B cell (primary cell): ENCODE measurements at regions of chr18 and their contacts with region 1.

Region 1: DNA sequence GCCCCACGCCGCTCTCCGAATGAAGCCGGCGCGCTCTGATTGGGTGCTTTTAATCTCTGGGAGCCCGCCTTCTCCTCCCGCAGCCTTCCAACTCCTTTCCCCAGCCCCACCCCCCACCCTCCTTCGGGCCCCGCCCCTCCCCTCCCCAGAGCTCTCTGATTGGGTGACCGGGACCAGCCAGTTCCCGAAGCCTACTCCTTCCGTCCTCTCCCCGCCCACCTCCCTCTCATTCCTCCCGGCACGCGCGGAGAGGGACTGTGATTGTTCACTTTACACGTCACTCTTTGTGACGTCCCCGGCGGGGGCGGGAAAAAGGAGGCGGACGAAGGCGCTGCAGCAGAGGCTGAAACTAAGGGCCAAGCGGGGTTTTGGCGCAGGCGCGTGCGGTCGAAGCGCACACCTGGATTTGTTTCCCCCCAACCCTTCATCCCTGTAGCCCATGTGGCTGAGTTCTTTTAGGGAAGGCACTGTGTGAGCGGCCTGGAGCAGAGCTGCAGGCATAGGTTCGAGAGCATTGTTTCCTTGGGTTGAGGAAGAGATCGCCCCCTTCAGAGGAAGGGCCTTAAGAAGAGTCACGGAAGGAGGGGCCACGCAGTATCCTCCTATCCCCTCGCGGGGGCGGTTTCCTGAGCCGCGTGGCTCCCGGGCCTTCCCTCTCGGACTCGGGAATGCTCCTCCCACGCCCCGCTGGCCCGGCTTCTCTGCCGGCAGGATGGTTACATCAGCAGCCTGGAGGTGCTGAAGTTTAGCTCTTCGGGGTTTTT is at the start of gene MEX3C:
- DNase-seq: peak; percentile 100
- ATAC-seq: peak; percentile 81
- H3K4me3 ChIP-seq: peak within 1 kb of the TSS; percentile 65 to 94 (median 84)
- H3K4me3 Mint-ChIP-seq: peak within 1 kb of the TSS; percentile 97
- H3K27ac ChIP-seq: peak within 1 kb of the TSS; percentile 74 to 87
- H3K27ac Mint-ChIP-seq: peak within 1 kb of the TSS; percentile 98
- H3K4me1 ChIP-seq: peaks cover 25 to 27% of the 10 kb centered on the region in 2 donors
- H3K4me1 Mint-ChIP-seq: peaks cover 32% of the 10 kb centered on the region
- H3K27me3 ChIP-seq: no peaks in the 10 kb centered on the region
- H3K27me3 Mint-ChIP-seq: no peaks in the 10 kb centered on the region
- CTCF ChIP-seq: peak; percentile 23
- total RNA-seq, gene MEX3C: 92.4 and 93.9 TPM in 2 replicates

Region 2: GRCh38 chr18:50266248-50266704 is 931.6 kb before region 1 on chr18 and contains the start of gene CFAP53:
- CTCF ChIA-PET with region 1: no interaction called
- POLR2A ChIA-PET with region 1: interaction called, 3 read pairs
- intact Hi-C with region 1: loop called (anchors 5 kb)
- DNase-seq: peak; percentile 96
- ATAC-seq: peak; percentile 79
- H3K4me3 ChIP-seq: peak within 1 kb of the TSS; percentile 55 to 78 (median 66)
- H3K4me3 Mint-ChIP-seq: peak within 1 kb of the TSS; percentile 93
- H3K27ac ChIP-seq: peak within 1 kb of the TSS; percentile 57 to 81
- H3K27ac Mint-ChIP-seq: peak within 1 kb of the TSS; percentile 93
- H3K4me1 ChIP-seq: peaks cover 15 to 28% of the 10 kb centered on the region in 2 donors
- H3K4me1 Mint-ChIP-seq: peaks cover 23% of the 10 kb centered on the region
- H3K27me3 ChIP-seq: no peaks in the 10 kb centered on the region
- H3K27me3 Mint-ChIP-seq: no peaks in the 10 kb centered on the region
- CTCF ChIP-seq: no peak
- total RNA-seq, gene CFAP53: 0.75 and 0.79 TPM in 2 replicates

Region 3: GRCh38 chr18:50374753-50375391 is 823.0 kb before region 1 on chr18 and contains the start of gene SKA1:
- CTCF ChIA-PET with region 1: no interaction called
- POLR2A ChIA-PET with region 1: no interaction called
- intact Hi-C with region 1: loop called (anchors 10 kb)
- DNase-seq: peak; percentile 96
- ATAC-seq: peak; percentile 100
- H3K4me3 ChIP-seq: peak within 1 kb of the TSS; percentile 60 to 78 (median 72)
- H3K4me3 Mint-ChIP-seq: peak within 1 kb of the TSS; percentile 85
- H3K27ac ChIP-seq: peak within 1 kb of the TSS; percentile 66 to 83
- H3K27ac Mint-ChIP-seq: peak within 1 kb of the TSS; percentile 89
- H3K4me1 ChIP-seq: peaks cover 5 to 16% of the 10 kb centered on the region in 2 donors
- H3K4me1 Mint-ChIP-seq: peaks cover 15% of the 10 kb centered on the region
- H3K27me3 ChIP-seq: peaks cover 0 to 7% (median 3%) of the 10 kb centered on the region in 4 experiments
- H3K27me3 Mint-ChIP-seq: peaks cover 13% of the 10 kb centered on the region
- CTCF ChIP-seq: no peak
- total RNA-seq, gene SKA1: 0.52 and 0.66 TPM in 2 replicates

Region 4: GRCh38 chr18:50878345-50879301 is 319.2 kb before region 1 on chr18 and contains the start of gene ME2:
- CTCF ChIA-PET with region 1: interaction called, 4 read pairs
- POLR2A ChIA-PET with region 1: interaction called, 18 read pairs
- intact Hi-C with region 1: loop called (anchors 2 kb)
- DNase-seq: peak; percentile 94
- ATAC-seq: peak; percentile 93
- H3K4me3 ChIP-seq: peak within 1 kb of the TSS; percentile 80 to 95 (median 90)
- H3K4me3 Mint-ChIP-seq: peak within 1 kb of the TSS; percentile 98
- H3K27ac ChIP-seq: peak within 1 kb of the TSS; percentile 96 to 98
- H3K27ac Mint-ChIP-seq: peak within 1 kb of the TSS; percentile 99
- H3K4me1 ChIP-seq: peaks cover 20 to 25% of the 10 kb centered on the region in 2 donors
- H3K4me1 Mint-ChIP-seq: peaks cover 30% of the 10 kb centered on the region
- H3K27me3 ChIP-seq: no peaks in the 10 kb centered on the region
- H3K27me3 Mint-ChIP-seq: peaks cover 3% of the 10 kb centered on the region
- CTCF ChIP-seq: no peak
- total RNA-seq, gene ME2: 55.4 and 57.8 TPM in 2 replicates

Region 5: DNA sequence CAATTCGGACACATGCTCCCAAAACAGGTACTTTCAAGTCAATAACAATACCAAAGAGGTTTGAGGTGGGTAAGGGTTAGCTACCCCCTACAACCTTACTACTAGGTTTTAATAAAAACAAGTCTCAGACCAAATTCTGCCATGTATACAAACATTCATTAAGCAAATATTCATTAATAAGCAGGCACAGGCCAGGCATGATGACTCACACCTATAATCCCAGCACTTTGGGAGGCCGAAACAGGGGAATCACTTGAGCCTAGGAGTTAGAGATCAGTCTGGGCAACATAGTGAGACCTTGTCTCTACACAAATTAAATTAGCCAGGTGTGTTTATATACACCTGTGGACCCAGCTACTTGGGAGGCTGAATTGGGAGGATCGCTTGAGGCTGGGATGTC is 241.7 kb before region 1 on chr18:
- CTCF ChIA-PET with region 1: no interaction called
- POLR2A ChIA-PET with region 1: no interaction called
- intact Hi-C with region 1: no loop called
- DNase-seq: no peak
- ATAC-seq: no peak
- H3K4me3 ChIP-seq: no peak overlapping the region
- H3K4me3 Mint-ChIP-seq: no peak overlapping the region
- H3K27ac ChIP-seq: no peak overlapping the region
- H3K27ac Mint-ChIP-seq: no peak overlapping the region
- H3K4me1 ChIP-seq: no peaks in the 10 kb centered on the region
- H3K4me1 Mint-ChIP-seq: no peaks in the 10 kb centered on the region
- H3K27me3 ChIP-seq: peaks cover 0 to 2% (median 0%) of the 10 kb centered on the region in 4 experiments
- H3K27me3 Mint-ChIP-seq: no peaks in the 10 kb centered on the region
- CTCF ChIP-seq: no peak

Region 6: GRCh38 chr18:51029694-51030536 is 167.9 kb before region 1 on chr18 and contains the start of gene SMAD4:
- CTCF ChIA-PET with region 1: interaction called, 3 read pairs
- POLR2A ChIA-PET with region 1: interaction called, 8 read pairs
- intact Hi-C with region 1: loop called (anchors 2 kb)
- DNase-seq: peak; percentile 97
- ATAC-seq: peak; percentile 83
- H3K4me3 ChIP-seq: peak within 1 kb of the TSS; percentile 61 to 81 (median 74)
- H3K4me3 Mint-ChIP-seq: peak within 1 kb of the TSS; percentile 97
- H3K27ac ChIP-seq: peak within 1 kb of the TSS; percentile 78 to 84
- H3K27ac Mint-ChIP-seq: peak within 1 kb of the TSS; percentile 99
- H3K4me1 ChIP-seq: peaks cover 22 to 42% of the 10 kb centered on the region in 2 donors
- H3K4me1 Mint-ChIP-seq: peaks cover 53% of the 10 kb centered on the region
- H3K27me3 ChIP-seq: no peaks in the 10 kb centered on the region
- H3K27me3 Mint-ChIP-seq: no peaks in the 10 kb centered on the region
- CTCF ChIP-seq: no peak
- total RNA-seq, gene SMAD4: 136 and 146 TPM in 2 replicates

Region 7: GRCh38 chr18:51153659-51154371 is 44.0 kb before region 1 on chr18:
- CTCF ChIA-PET with region 1: interaction called, 45 read pairs
- POLR2A ChIA-PET with region 1: interaction called, 82 read pairs
- intact Hi-C with region 1: loop called (anchors 1 kb)
- DNase-seq: peak; percentile 81
- ATAC-seq: peak; percentile 71
- H3K4me3 ChIP-seq: peak overlapping the region; percentile 26 to 76 (median 57)
- H3K4me3 Mint-ChIP-seq: peak overlapping the region; percentile 92
- H3K27ac ChIP-seq: peak overlapping the region; percentile 95
- H3K27ac Mint-ChIP-seq: peak overlapping the region; percentile 100
- H3K4me1 ChIP-seq: peaks cover 28 to 41% of the 10 kb centered on the region in 2 donors
- H3K4me1 Mint-ChIP-seq: peaks cover 49% of the 10 kb centered on the region
- H3K27me3 ChIP-seq: no peaks in the 10 kb centered on the region
- H3K27me3 Mint-ChIP-seq: no peaks in the 10 kb centered on the region
- CTCF ChIP-seq: no peak

Region 8: GRCh38 chr18:51350081-51350480 is 152.2 kb after region 1 on chr18:
- CTCF ChIA-PET with region 1: no interaction called
- POLR2A ChIA-PET with region 1: no interaction called
- intact Hi-C with region 1: no loop called
- DNase-seq: no peak
- ATAC-seq: no peak
- H3K4me3 ChIP-seq: no peak overlapping the region
- H3K4me3 Mint-ChIP-seq: no peak overlapping the region
- H3K27ac ChIP-seq: no peak overlapping the region
- H3K27ac Mint-ChIP-seq: no peak overlapping the region
- H3K4me1 ChIP-seq: no peaks in the 10 kb centered on the region
- H3K4me1 Mint-ChIP-seq: no peaks in the 10 kb centered on the region
- H3K27me3 ChIP-seq: peaks cover 0 to 12% (median 3%) of the 10 kb centered on the region in 4 experiments
- H3K27me3 Mint-ChIP-seq: peaks cover 28% of the 10 kb centered on the region
- CTCF ChIP-seq: no peak

Region 9: GRCh38 chr18:51513541-51513940 is 315.7 kb after region 1 on chr18:
- CTCF ChIA-PET with region 1: no interaction called
- POLR2A ChIA-PET with region 1: interaction called, 10 read pairs
- intact Hi-C with region 1: no loop called
- DNase-seq: no peak
- ATAC-seq: no peak
- H3K4me3 ChIP-seq: no peak overlapping the region
- H3K4me3 Mint-ChIP-seq: no peak overlapping the region
- H3K27ac ChIP-seq: no peak overlapping the region
- H3K27ac Mint-ChIP-seq: no peak overlapping the region
- H3K4me1 ChIP-seq: no peaks in the 10 kb centered on the region
- H3K4me1 Mint-ChIP-seq: no peaks in the 10 kb centered on the region
- H3K27me3 ChIP-seq: no peaks in the 10 kb centered on the region
- H3K27me3 Mint-ChIP-seq: no peaks in the 10 kb centered on the region
- CTCF ChIP-seq: no peak